PC-3 (cell line): ENCODE measurements at regions of chr10 and their contacts with region 1.

Region 1: DNA sequence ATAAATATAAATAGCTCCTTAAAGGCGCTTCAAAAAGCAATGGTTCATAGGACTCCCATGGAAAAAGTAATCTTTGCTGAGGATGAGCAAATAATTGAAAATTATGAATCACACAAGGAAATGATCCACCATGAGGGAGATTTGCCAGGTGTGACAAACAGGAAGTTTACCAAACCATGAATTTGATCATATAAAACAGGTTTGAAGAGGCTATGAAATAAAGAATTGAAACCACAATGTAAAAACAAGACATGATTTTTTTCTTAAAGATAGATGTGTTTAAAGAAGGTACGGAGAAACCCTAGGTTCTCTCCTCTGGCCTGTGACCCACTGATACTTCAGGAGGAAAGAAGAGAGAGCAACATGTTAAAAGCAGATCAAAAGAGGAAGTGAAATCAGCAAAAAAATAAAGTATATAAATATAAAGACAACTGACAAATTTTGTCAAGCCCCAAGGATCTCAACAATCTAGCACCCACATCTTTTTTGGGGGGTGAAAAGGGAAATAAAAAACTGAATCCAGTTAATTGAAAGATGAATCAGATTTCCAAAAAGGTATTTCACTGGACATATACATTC is 111.3 kb upstream of the ASAH2 start:
- DNase-seq: peak; percentile 100
- ATAC-seq: peak; percentile 84
- H3K4me3 ChIP-seq: peak overlapping the region; percentile 12; the same call in 1 of the 2 replicates
- H3K27ac ChIP-seq: peak overlapping the region; percentile 88
- H3K4me1 ChIP-seq: peaks cover 45% of the 10 kb centered on the region
- H3K27me3 ChIP-seq: no peaks in the 10 kb centered on the region
- CTCF ChIP-seq: no peak

Region 2: GRCh38 chr10:50224330-50224952 is 138.2 kb before region 1 on chr10:
- CTCF ChIA-PET with region 1: interaction called, 3 read pairs
- POLR2A ChIA-PET with region 1: no interaction called
- intact Hi-C with region 1: loop called (anchors 1 kb)
- DNase-seq: peak; percentile 99
- ATAC-seq: peak; percentile 99
- H3K4me3 ChIP-seq: no peak overlapping the region
- H3K27ac ChIP-seq: no peak overlapping the region
- H3K4me1 ChIP-seq: peaks cover 6% of the 10 kb centered on the region
- H3K27me3 ChIP-seq: peaks cover 8% of the 10 kb centered on the region; the same call in 1 of the 2 replicates
- CTCF ChIP-seq: peak; percentile 97

Region 3: DNA sequence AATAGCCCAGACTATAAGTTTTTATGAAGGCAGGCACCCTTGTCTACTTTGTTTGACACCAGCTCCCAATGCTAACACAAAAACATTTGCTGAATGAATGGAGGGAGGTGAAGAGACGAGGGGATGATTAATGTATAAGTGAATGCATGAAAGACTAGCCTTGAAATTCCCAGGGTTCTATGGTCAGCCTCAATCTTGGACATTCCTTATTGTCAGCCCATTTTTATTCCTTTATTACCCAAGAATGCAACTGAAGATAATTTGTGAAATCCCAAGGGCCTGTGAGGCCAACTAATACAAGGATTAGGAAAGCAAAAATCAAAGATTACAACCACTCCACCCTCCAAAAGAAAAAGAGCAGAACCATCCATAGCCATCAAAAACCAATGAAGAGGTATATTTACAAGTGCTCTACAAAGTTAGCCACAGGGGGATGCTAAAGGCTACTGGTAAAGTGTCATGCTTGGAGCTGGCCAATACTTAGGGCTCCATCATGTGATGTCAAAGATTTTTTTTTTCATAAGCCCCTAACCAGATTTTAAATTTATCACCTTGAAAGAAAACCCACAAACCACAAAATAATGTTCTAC is 71.3 kb before region 1 on chr10:
- CTCF ChIA-PET with region 1: no interaction called
- POLR2A ChIA-PET with region 1: no interaction called
- intact Hi-C with region 1: loop called (anchors 5 kb)
- DNase-seq: peak; percentile 58
- ATAC-seq: peak; percentile 41; the same call in 1 of the 2 replicates
- H3K4me3 ChIP-seq: no peak overlapping the region
- H3K27ac ChIP-seq: no peak overlapping the region
- H3K4me1 ChIP-seq: no peaks in the 10 kb centered on the region
- H3K27me3 ChIP-seq: no peaks in the 10 kb centered on the region
- CTCF ChIP-seq: peak; percentile 78

Region 4: GRCh38 chr10:50310560-50311174 is 52.0 kb before region 1 on chr10:
- CTCF ChIA-PET with region 1: no interaction called
- POLR2A ChIA-PET with region 1: no interaction called
- intact Hi-C with region 1: no loop called
- DNase-seq: peak; percentile 84
- ATAC-seq: peak; percentile 68
- H3K4me3 ChIP-seq: no peak overlapping the region
- H3K27ac ChIP-seq: no peak overlapping the region
- H3K4me1 ChIP-seq: peaks cover 13% of the 10 kb centered on the region
- H3K27me3 ChIP-seq: no peaks in the 10 kb centered on the region
- CTCF ChIP-seq: peak; percentile 90

Region 5: GRCh38 chr10:50336140-50336539 is 26.5 kb before region 1 on chr10:
- CTCF ChIA-PET with region 1: no interaction called
- POLR2A ChIA-PET with region 1: no interaction called
- intact Hi-C with region 1: no loop called
- DNase-seq: no peak
- ATAC-seq: no peak
- H3K4me3 ChIP-seq: no peak overlapping the region
- H3K27ac ChIP-seq: no peak overlapping the region
- H3K4me1 ChIP-seq: peaks cover 9% of the 10 kb centered on the region
- H3K27me3 ChIP-seq: no peaks in the 10 kb centered on the region
- CTCF ChIP-seq: no peak

Region 6: DNA sequence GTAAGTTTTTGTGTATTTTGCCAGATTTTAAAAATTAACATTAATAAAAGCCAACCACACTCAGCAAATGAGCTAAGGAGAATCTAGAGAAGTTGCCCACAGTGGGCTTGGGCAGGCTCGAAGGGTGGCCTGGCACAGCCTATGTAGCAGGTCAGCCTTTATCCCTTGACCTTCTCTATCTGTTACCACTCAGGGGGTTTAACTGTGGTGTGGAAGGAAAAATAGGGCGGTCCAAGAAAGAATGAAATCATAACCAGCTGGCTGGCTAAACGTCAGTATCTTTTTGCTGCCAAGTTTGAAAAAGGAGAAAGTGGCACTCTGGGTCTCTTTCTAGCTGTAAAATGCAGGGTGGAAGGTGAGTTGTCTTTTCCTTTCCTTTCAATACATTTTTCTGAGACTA is 19.0 kb after region 1 on chr10:
- CTCF ChIA-PET with region 1: no interaction called
- POLR2A ChIA-PET with region 1: no interaction called
- intact Hi-C with region 1: no loop called
- DNase-seq: no peak
- ATAC-seq: no peak
- H3K4me3 ChIP-seq: no peak overlapping the region
- H3K27ac ChIP-seq: no peak overlapping the region
- H3K4me1 ChIP-seq: no peaks in the 10 kb centered on the region
- H3K27me3 ChIP-seq: no peaks in the 10 kb centered on the region
- CTCF ChIP-seq: no peak

Region 7: DNA sequence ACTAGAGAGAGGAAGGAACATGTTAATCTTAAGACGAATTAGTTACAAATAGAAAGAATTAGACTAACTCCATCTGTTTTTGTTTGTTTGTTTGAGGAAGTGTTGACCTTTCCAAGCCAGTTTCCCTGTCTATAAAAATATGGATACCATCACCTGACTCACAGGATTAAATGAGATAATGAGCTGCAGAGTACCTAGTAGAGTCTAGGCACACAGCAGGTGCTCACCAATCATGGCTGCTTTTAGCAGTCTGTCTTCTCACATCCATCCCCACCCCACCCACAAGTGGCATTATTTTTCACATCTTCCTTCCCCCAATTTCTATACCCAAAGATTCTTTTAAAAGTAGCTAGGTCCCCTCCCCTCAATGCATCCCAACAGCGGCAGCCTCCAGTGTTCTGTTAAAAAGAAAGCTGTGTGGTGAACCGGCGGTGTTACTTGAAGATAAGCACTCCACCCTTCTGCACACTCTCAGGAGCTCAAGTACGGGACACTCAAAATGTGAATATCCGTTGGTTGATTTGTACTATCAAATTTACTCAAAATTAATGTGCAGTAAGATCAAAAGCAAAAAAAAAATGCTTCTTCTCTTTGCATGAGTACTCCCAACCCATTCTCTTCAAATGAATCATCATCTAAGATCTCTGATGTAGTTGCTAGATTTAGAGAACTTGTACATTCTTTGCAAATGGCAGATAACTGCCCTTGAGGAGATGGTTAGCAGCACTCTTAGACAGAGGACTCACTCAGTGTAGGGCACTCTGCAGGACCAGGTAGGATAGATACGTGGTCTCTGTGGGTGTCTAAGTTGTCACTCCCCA is 34.1 kb after region 1 on chr10:
- CTCF ChIA-PET with region 1: no interaction called
- POLR2A ChIA-PET with region 1: no interaction called
- intact Hi-C with region 1: loop called (anchors 1 kb)
- DNase-seq: peak; percentile 73
- ATAC-seq: 0 out of 2 replicates have a peak, but pooled peaks have one; percentile 6
- H3K4me3 ChIP-seq: no peak overlapping the region
- H3K27ac ChIP-seq: 0 out of 2 replicates have a peak overlapping the region, but pooled peaks have one; percentile 81
- H3K4me1 ChIP-seq: peaks cover 56% of the 10 kb centered on the region
- H3K27me3 ChIP-seq: no peaks in the 10 kb centered on the region
- CTCF ChIP-seq: no peak

Region 8: GRCh38 chr10:50421026-50421719 is 58.5 kb after region 1 on chr10:
- CTCF ChIA-PET with region 1: interaction called, 19 read pairs
- POLR2A ChIA-PET with region 1: no interaction called
- intact Hi-C with region 1: loop called (anchors 1 kb)
- DNase-seq: peak; percentile 91
- ATAC-seq: peak; percentile 60
- H3K4me3 ChIP-seq: no peak overlapping the region
- H3K27ac ChIP-seq: no peak overlapping the region
- H3K4me1 ChIP-seq: peaks cover 34% of the 10 kb centered on the region
- H3K27me3 ChIP-seq: no peaks in the 10 kb centered on the region
- CTCF ChIP-seq: peak; percentile 100

Region 9: GRCh38 chr10:50605269-50606263 is 242.9 kb after region 1 on chr10:
- CTCF ChIA-PET with region 1: no interaction called
- POLR2A ChIA-PET with region 1: no interaction called
- intact Hi-C with region 1: loop called (anchors 1 kb)
- DNase-seq: peak; percentile 99
- ATAC-seq: peak; percentile 73
- H3K4me3 ChIP-seq: peak overlapping the region; percentile 13; the same call in 1 of the 2 replicates
- H3K27ac ChIP-seq: peak overlapping the region; percentile 66
- H3K4me1 ChIP-seq: peaks cover 77% of the 10 kb centered on the region
- H3K27me3 ChIP-seq: no peaks in the 10 kb centered on the region
- CTCF ChIP-seq: no peak